CD4-positive, alpha-beta T cell (primary cell): ENCODE measurements at regions of chr2 and their contacts with region 1.

Region 1: GRCh38 chr2:161223139-161223732 is 63.0 kb downstream of the TANK start:
- DNase-seq: peak in 4 of 14 experiments; percentile 40 to 73 (median 66)
- ATAC-seq: peak; percentile 82
- H3K4me3 ChIP-seq: no peak overlapping the region
- H3K4me3 Mint-ChIP-seq: no peak overlapping the region
- H3K27ac ChIP-seq: no peak overlapping the region
- H3K27ac Mint-ChIP-seq: no peak overlapping the region
- H3K4me1 ChIP-seq: no peaks in the 10 kb centered on the region
- H3K4me1 Mint-ChIP-seq: peaks cover 4% of the 10 kb centered on the region
- H3K27me3 ChIP-seq: no peaks in the 10 kb centered on the region
- H3K27me3 Mint-ChIP-seq: no peaks in the 10 kb centered on the region
- CTCF ChIP-seq: peak; percentile 89

Region 2: DNA sequence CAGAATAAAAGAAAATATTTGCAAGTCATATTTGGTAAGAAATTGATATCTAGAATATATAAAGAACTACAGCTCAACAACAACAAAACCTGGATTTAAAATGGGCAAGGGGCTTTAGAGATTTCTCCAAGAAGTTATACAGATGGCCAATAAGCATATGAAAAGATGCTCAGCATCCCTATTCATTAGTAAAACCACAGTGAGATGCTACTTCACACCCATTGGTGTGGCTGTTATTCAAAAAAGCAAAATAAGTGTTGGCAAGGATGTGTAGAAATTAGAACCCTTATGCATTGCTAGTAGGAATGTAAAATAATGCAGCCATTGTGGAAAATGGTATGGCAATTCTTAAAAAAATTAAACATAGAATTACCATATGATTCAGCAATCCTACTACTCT is 33.2 kb before region 1 on chr2:
- CTCF ChIA-PET with region 1: no interaction called
- POLR2A ChIA-PET with region 1: no interaction called
- intact Hi-C with region 1: no loop called
- DNase-seq: no peak
- ATAC-seq: no peak
- H3K4me3 ChIP-seq: no peak overlapping the region
- H3K4me3 Mint-ChIP-seq: no peak overlapping the region
- H3K27ac ChIP-seq: no peak overlapping the region
- H3K27ac Mint-ChIP-seq: no peak overlapping the region
- H3K4me1 ChIP-seq: no peaks in the 10 kb centered on the region
- H3K4me1 Mint-ChIP-seq: peaks cover 69% of the 10 kb centered on the region
- H3K27me3 ChIP-seq: no peaks in the 10 kb centered on the region
- H3K27me3 Mint-ChIP-seq: no peaks in the 10 kb centered on the region
- CTCF ChIP-seq: no peak

Region 3: GRCh38 chr2:161238560-161239325 is 15.5 kb after region 1 on chr2:
- CTCF ChIA-PET with region 1: interaction called, 8 read pairs
- POLR2A ChIA-PET with region 1: interaction called, 11 read pairs
- intact Hi-C with region 1: no loop called
- DNase-seq: peak; percentile 40 to 83 (median 56)
- ATAC-seq: peak; percentile 75
- H3K4me3 ChIP-seq: peak overlapping the region; percentile 56
- H3K4me3 Mint-ChIP-seq: peak overlapping the region; percentile 90
- H3K27ac ChIP-seq: no peak overlapping the region
- H3K27ac Mint-ChIP-seq: peak overlapping the region; percentile 70
- H3K4me1 ChIP-seq: peaks cover 30% of the 10 kb centered on the region
- H3K4me1 Mint-ChIP-seq: peaks cover 61% of the 10 kb centered on the region
- H3K27me3 ChIP-seq: no peaks in the 10 kb centered on the region
- H3K27me3 Mint-ChIP-seq: no peaks in the 10 kb centered on the region
- CTCF ChIP-seq: no peak

Region 4: GRCh38 chr2:161243905-161244304 is 20.7 kb after region 1 on chr2:
- CTCF ChIA-PET with region 1: interaction called, 3 read pairs
- POLR2A ChIA-PET with region 1: interaction called, 4 read pairs
- intact Hi-C with region 1: loop called in 1 of 2 experiments (anchors 2 kb)
- DNase-seq: peak in 4 of 14 experiments; percentile 20 to 39 (median 28)
- ATAC-seq: no peak
- H3K4me3 ChIP-seq: peak overlapping the region; percentile 52
- H3K4me3 Mint-ChIP-seq: peak overlapping the region; percentile 86
- H3K27ac ChIP-seq: peak overlapping the region; percentile 25 to 54
- H3K27ac Mint-ChIP-seq: peak overlapping the region; percentile 84
- H3K4me1 ChIP-seq: peaks cover 23% of the 10 kb centered on the region
- H3K4me1 Mint-ChIP-seq: peaks cover 72% of the 10 kb centered on the region
- H3K27me3 ChIP-seq: no peaks in the 10 kb centered on the region
- H3K27me3 Mint-ChIP-seq: no peaks in the 10 kb centered on the region
- CTCF ChIP-seq: no peak

Region 5: GRCh38 chr2:161273038-161273760 is 50.0 kb after region 1 on chr2:
- CTCF ChIA-PET with region 1: interaction called, 15 read pairs
- POLR2A ChIA-PET with region 1: no interaction called
- intact Hi-C with region 1: loop called (anchors 1 kb)
- DNase-seq: peak in 4 of 14 experiments; percentile 50 to 81 (median 72)
- ATAC-seq: peak; percentile 64
- H3K4me3 ChIP-seq: no peak overlapping the region
- H3K4me3 Mint-ChIP-seq: no peak overlapping the region
- H3K27ac ChIP-seq: no peak overlapping the region
- H3K27ac Mint-ChIP-seq: no peak overlapping the region
- H3K4me1 ChIP-seq: no peaks in the 10 kb centered on the region
- H3K4me1 Mint-ChIP-seq: no peaks in the 10 kb centered on the region
- H3K27me3 ChIP-seq: no peaks in the 10 kb centered on the region
- H3K27me3 Mint-ChIP-seq: peaks cover 9% of the 10 kb centered on the region
- CTCF ChIP-seq: peak; percentile 92

Region 6: DNA sequence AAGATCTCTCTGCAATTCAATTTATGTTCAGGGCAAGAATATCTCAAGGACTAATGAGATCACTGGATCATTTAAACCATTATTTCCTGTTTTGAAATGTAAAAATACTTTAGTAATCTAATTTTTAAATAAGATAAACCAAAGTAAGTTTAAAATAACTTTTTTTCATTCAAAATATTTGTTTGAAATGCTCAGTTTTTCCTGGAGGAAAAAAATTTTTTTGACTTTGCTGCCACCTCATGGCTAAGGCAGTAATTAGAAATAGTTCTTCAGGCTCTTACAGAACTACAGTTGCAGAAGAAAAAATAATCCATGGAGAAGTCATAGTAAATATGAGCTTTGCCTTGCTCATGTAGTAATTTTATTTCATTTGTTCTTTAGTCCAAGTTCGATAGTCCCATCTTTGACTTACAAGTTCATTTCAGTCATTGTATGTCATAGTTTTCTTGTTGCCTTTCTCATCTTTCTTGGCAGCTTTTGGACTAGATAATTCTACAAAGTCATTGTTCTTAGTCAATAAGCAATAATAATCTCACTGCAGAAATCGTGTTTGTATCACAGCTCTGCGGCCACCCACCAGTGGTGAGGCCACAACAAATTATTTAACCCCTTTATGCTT is 723.4 kb after region 1 on chr2:
- CTCF ChIA-PET with region 1: no interaction called
- POLR2A ChIA-PET with region 1: no interaction called
- intact Hi-C with region 1: loop called (anchors 5 to 10 kb)
- DNase-seq: peak in 4 of 14 experiments; percentile 12 to 48 (median 41)
- ATAC-seq: no peak
- H3K4me3 ChIP-seq: no peak overlapping the region
- H3K4me3 Mint-ChIP-seq: no peak overlapping the region
- H3K27ac ChIP-seq: no peak overlapping the region
- H3K27ac Mint-ChIP-seq: no peak overlapping the region
- H3K4me1 ChIP-seq: no peaks in the 10 kb centered on the region
- H3K4me1 Mint-ChIP-seq: no peaks in the 10 kb centered on the region
- H3K27me3 ChIP-seq: no peaks in the 10 kb centered on the region
- H3K27me3 Mint-ChIP-seq: no peaks in the 10 kb centered on the region
- CTCF ChIP-seq: peak; percentile 78

Region 7: GRCh38 chr2:162475661-162476060 is 1252.4 kb after region 1 on chr2:
- CTCF ChIA-PET with region 1: no interaction called
- POLR2A ChIA-PET with region 1: no interaction called
- intact Hi-C with region 1: no loop called
- DNase-seq: no peak
- ATAC-seq: no peak
- H3K4me3 ChIP-seq: no peak overlapping the region
- H3K4me3 Mint-ChIP-seq: no peak overlapping the region
- H3K27ac ChIP-seq: no peak overlapping the region
- H3K27ac Mint-ChIP-seq: no peak overlapping the region
- H3K4me1 ChIP-seq: no peaks in the 10 kb centered on the region
- H3K4me1 Mint-ChIP-seq: no peaks in the 10 kb centered on the region
- H3K27me3 ChIP-seq: no peaks in the 10 kb centered on the region
- H3K27me3 Mint-ChIP-seq: no peaks in the 10 kb centered on the region
- CTCF ChIP-seq: no peak